Activated CD4-positive, alpha-beta T cell treated with anti-CD3 and anti-CD28 coated beads, Interleukin-2, amount 10 ng/mL, durations not matched to agents 24 days and 14 days (primary cell): ENCODE measurements at regions of chr19 and their contacts with region 1.

Region 1: GRCh38 chr19:47190167-47190727 is 40.8 kb downstream of the BBC3 start:
- DNase-seq: peak; percentile 86
- H3K4me3 Mint-ChIP-seq: peak overlapping the region; percentile 62
- H3K27ac Mint-ChIP-seq: peak overlapping the region; percentile 74
- H3K4me1 Mint-ChIP-seq: peaks cover 51% of the 10 kb centered on the region
- H3K27me3 Mint-ChIP-seq: no peaks in the 10 kb centered on the region

Region 2: GRCh38 chr19:46954993-46955812 is 235.0 kb before region 1 on chr19:
- intact Hi-C with region 1: loop called (anchors 10 kb)
- DNase-seq: peak; percentile 84
- H3K4me3 Mint-ChIP-seq: peak overlapping the region; percentile 81
- H3K27ac Mint-ChIP-seq: peak overlapping the region; percentile 94
- H3K4me1 Mint-ChIP-seq: peaks cover 67% of the 10 kb centered on the region
- H3K27me3 Mint-ChIP-seq: no peaks in the 10 kb centered on the region

Region 3: GRCh38 chr19:47146920-47147319 is 43.3 kb before region 1 on chr19:
- intact Hi-C with region 1: no loop called
- DNase-seq: no peak
- H3K4me3 Mint-ChIP-seq: peak overlapping the region; percentile 62
- H3K27ac Mint-ChIP-seq: peak overlapping the region; percentile 76
- H3K4me1 Mint-ChIP-seq: peaks cover 52% of the 10 kb centered on the region
- H3K27me3 Mint-ChIP-seq: no peaks in the 10 kb centered on the region

Region 4: GRCh38 chr19:47157431-47158321 is 32.6 kb before region 1 on chr19:
- intact Hi-C with region 1: loop called (anchors 1 kb)
- DNase-seq: peak; percentile 78
- H3K4me3 Mint-ChIP-seq: peak overlapping the region; percentile 80
- H3K27ac Mint-ChIP-seq: peak overlapping the region; percentile 93
- H3K4me1 Mint-ChIP-seq: peaks cover 46% of the 10 kb centered on the region
- H3K27me3 Mint-ChIP-seq: no peaks in the 10 kb centered on the region

Region 5: DNA sequence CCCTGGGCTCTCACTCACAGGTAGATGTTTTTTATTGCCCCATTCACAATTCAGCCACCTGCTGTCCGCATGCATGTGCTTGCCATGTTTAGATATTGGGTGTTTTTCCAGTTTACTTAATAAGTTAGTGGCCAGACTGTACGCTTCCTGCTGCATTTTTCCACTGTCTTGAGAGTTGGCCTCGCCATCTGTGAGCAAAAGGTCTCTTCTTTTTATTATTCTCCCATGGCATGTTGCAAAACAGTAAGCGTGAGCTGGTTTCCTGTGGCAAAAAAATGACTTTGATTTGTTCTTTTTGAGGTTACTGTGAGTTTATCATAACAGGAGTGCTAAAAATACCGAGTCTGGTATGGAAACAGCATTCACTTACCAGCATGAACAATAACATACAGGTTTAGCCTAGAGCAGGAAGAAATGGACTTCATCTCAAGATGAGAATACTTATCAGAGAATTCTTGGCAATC is 13.6 kb before region 1 on chr19:
- intact Hi-C with region 1: loop called (anchors 1 kb)
- DNase-seq: peak; percentile 82
- H3K4me3 Mint-ChIP-seq: peak overlapping the region; percentile 79
- H3K27ac Mint-ChIP-seq: peak overlapping the region; percentile 94
- H3K4me1 Mint-ChIP-seq: peaks cover 43% of the 10 kb centered on the region
- H3K27me3 Mint-ChIP-seq: no peaks in the 10 kb centered on the region

Region 6: GRCh38 chr19:47210689-47211316 is 20.6 kb after region 1 on chr19:
- intact Hi-C with region 1: no loop called
- DNase-seq: peak; percentile 94
- H3K4me3 Mint-ChIP-seq: no peak overlapping the region
- H3K27ac Mint-ChIP-seq: peak overlapping the region; percentile 61
- H3K4me1 Mint-ChIP-seq: peaks cover 8% of the 10 kb centered on the region
- H3K27me3 Mint-ChIP-seq: no peaks in the 10 kb centered on the region

Region 7: GRCh38 chr19:47225746-47226425 is 35.6 kb after region 1 on chr19:
- intact Hi-C with region 1: loop called (anchors 1 kb)
- DNase-seq: peak; percentile 96
- H3K4me3 Mint-ChIP-seq: peak overlapping the region; percentile 88
- H3K27ac Mint-ChIP-seq: peak overlapping the region; percentile 92
- H3K4me1 Mint-ChIP-seq: peaks cover 13% of the 10 kb centered on the region
- H3K27me3 Mint-ChIP-seq: no peaks in the 10 kb centered on the region